PC-3 (cell line): ENCODE measurements at regions of chr3 and their contacts with region 1.

Region 1: DNA sequence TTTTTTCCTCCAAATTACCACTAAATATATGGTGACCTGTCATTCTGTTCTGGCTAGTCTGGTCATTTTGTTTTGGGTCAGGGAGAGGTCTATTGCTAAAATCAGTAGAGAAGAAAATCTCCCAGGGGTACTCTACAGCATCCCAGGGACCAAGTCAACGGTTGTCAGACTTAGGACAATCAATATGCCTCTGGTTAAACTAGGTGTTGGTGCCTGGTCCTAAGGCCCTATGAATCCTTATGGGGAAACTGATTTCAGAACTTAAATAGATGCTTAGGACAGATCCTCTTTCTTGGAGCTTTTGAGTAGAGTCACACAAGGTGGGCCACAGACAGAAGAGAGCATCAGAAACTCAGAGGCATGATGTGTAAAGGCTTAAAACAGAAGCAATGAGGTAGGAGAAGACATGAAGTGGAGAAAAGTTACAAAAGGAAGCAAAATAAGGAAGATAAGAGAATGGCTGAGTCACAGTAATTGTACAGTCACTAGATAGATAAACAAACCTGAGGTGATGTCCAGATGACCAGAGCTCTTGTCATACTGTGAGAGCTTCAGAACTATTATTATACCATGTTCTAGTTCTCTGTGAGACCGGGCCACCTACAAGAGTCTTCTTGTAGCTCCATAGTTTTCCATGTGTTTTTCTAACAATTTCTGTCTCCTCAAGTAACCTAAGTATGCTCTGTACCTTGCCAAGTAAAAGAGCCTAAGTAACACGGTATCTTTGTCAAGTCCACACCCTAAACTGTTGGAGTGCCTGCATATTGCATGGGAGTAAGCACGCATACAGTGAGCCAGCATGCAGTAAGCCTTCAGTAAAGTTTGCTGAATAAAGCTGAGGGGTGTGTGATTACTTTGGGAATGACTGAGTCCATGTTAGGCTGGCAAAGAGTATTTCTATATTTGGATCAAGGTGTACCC is 44.6 kb upstream of the LEKR1 start:
- DNase-seq: peak; percentile 85
- ATAC-seq: peak; percentile 76
- H3K4me3 ChIP-seq: peak overlapping the region; percentile 7; the same call in 1 of the 2 replicates
- H3K27ac ChIP-seq: peak overlapping the region; percentile 94
- H3K4me1 ChIP-seq: peaks cover 47% of the 10 kb centered on the region
- H3K27me3 ChIP-seq: no peaks in the 10 kb centered on the region
- CTCF ChIP-seq: no peak

Region 2: DNA sequence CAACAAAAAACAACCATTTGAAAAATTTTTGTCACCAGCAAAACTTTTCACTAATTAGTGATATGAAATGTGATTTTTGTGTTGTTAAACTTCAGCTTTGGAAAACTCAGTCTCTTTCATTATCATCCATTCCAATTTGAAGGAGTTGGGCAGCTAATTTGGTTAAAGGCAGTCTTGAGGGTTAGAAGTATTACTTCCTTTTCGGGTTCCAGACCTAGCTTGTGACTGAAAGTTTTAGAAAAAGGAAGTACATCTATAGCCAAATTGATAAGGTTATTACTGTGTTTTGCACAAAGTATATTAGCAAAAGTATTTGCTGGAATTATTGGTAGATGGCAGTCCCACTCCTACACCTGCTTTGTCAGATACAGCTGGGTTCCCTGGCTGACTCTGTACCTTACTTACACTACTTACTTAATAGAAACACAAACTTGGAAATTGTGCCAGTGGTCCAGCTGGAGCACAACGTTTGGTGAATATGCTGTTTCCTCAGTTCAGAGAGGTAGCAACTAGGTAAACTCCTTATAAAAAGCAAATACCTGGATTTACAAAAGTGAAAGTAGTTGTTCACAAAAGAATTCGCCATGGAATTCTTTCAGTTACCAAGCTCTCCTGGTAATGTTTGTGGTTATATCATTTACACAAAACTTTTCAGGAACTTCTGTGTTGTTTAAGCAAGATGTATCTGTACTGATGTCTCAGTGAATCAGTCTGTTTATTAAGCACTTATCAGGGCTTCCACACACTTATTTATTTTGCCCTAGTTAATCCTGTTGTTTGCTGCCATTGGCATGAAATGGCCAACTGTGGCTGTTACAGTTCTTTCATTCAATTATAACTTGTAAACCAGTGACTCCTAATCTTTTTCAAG is 75.6 kb before region 1 on chr3:
- CTCF ChIA-PET with region 1: no interaction called
- POLR2A ChIA-PET with region 1: no interaction called
- intact Hi-C with region 1: loop called (anchors 5 kb)
- DNase-seq: peak; percentile 31
- ATAC-seq: peak; percentile 58
- H3K4me3 ChIP-seq: no peak overlapping the region
- H3K27ac ChIP-seq: peak overlapping the region; percentile 10
- H3K4me1 ChIP-seq: no peaks in the 10 kb centered on the region
- H3K27me3 ChIP-seq: no peaks in the 10 kb centered on the region
- CTCF ChIP-seq: no peak

Region 3: GRCh38 chr3:156743859-156744258 is 37.7 kb before region 1 on chr3:
- CTCF ChIA-PET with region 1: no interaction called
- POLR2A ChIA-PET with region 1: no interaction called
- intact Hi-C with region 1: no loop called
- DNase-seq: no peak
- ATAC-seq: no peak
- H3K4me3 ChIP-seq: no peak overlapping the region
- H3K27ac ChIP-seq: no peak overlapping the region
- H3K4me1 ChIP-seq: no peaks in the 10 kb centered on the region
- H3K27me3 ChIP-seq: no peaks in the 10 kb centered on the region
- CTCF ChIP-seq: no peak

Region 4: DNA sequence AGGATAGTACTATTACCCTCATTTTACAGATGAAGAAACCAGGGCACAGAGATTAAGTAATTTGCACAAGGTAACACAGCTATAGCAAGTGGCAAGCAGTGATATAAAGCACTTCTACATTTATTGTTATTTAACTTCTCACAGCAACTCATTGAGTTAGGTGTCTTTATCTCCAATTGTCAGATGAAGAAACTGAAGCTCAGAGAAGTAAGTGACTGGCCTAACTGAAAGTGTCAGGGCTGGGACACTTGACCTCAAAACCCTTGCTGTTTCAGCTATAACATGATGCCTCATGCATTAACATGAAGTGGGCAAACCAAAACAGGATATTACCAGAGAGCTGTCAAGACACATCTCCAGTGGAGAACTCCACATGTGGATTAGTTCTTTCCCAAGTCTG is 21.2 kb before region 1 on chr3:
- CTCF ChIA-PET with region 1: no interaction called
- POLR2A ChIA-PET with region 1: no interaction called
- intact Hi-C with region 1: loop called (anchors 2 kb)
- DNase-seq: no peak
- ATAC-seq: no peak
- H3K4me3 ChIP-seq: no peak overlapping the region
- H3K27ac ChIP-seq: no peak overlapping the region
- H3K4me1 ChIP-seq: 0 out of 2 replicates have a peak, but pooled peaks cover 5% of the 10 kb centered on the region
- H3K27me3 ChIP-seq: no peaks in the 10 kb centered on the region
- CTCF ChIP-seq: no peak

Region 5: DNA sequence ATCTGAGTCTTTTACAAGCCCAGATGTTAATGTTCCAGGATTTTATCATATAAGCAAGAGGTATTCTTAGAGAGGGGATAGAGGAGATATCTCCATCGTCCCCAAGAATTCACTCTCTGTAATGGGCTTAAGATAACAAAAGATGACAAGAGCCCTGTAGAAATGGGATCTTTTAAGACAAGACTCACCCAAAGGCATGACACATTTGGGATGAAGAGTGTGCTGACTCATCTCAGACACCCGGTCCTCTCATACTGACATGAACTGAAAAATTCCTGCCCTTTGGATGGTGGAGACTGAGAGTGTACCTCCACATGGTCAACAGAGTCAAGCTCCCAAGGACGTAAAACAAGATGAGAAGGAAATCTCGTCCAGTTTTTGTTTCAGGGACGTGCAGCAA is 55.5 kb after region 1 on chr3:
- CTCF ChIA-PET with region 1: no interaction called
- POLR2A ChIA-PET with region 1: no interaction called
- intact Hi-C with region 1: no loop called
- DNase-seq: peak; percentile 57
- ATAC-seq: peak; percentile 71
- H3K4me3 ChIP-seq: no peak overlapping the region
- H3K27ac ChIP-seq: no peak overlapping the region
- H3K4me1 ChIP-seq: 0 out of 2 replicates have a peak, but pooled peaks cover 6% of the 10 kb centered on the region
- H3K27me3 ChIP-seq: no peaks in the 10 kb centered on the region
- CTCF ChIP-seq: no peak